Dendritic cell treated with granulocyte-macrophage colony-stimulating factor and Interleukin-4, amounts not matched to agents 40 ng/mL and 50 ng/mL, for 4 days (primary cell): ENCODE measurements at regions of chr14 and their contacts with region 1.

Region 1: GRCh38 chr14:66359500-66359899 is 126.7 kb upstream of the CCDC196 start:
- H3K4me3 Mint-ChIP-seq: no peak overlapping the region
- H3K27ac Mint-ChIP-seq: no peak overlapping the region
- H3K4me1 Mint-ChIP-seq: no peaks in the 10 kb centered on the region
- H3K27me3 Mint-ChIP-seq: no peaks in the 10 kb centered on the region

Region 2: GRCh38 chr14:66425402-66425801 is 65.9 kb after region 1 on chr14:
- intact Hi-C with region 1: no loop called
- H3K4me3 Mint-ChIP-seq: no peak overlapping the region
- H3K27ac Mint-ChIP-seq: no peak overlapping the region
- H3K4me1 Mint-ChIP-seq: no peaks in the 10 kb centered on the region
- H3K27me3 Mint-ChIP-seq: no peaks in the 10 kb centered on the region

Region 3: GRCh38 chr14:67111022-67111421 is 751.5 kb after region 1 on chr14:
- intact Hi-C with region 1: loop called (anchors 5 kb)
- H3K4me3 Mint-ChIP-seq: no peak overlapping the region
- H3K27ac Mint-ChIP-seq: no peak overlapping the region
- H3K4me1 Mint-ChIP-seq: no peaks in the 10 kb centered on the region
- H3K27me3 Mint-ChIP-seq: no peaks in the 10 kb centered on the region